Activated CD4-positive, alpha-beta T cell treated with anti-CD3 and anti-CD28 coated beads for 36 hours (primary cell): ENCODE measurements at regions of chr6 and their contacts with region 1.

Region 1: DNA sequence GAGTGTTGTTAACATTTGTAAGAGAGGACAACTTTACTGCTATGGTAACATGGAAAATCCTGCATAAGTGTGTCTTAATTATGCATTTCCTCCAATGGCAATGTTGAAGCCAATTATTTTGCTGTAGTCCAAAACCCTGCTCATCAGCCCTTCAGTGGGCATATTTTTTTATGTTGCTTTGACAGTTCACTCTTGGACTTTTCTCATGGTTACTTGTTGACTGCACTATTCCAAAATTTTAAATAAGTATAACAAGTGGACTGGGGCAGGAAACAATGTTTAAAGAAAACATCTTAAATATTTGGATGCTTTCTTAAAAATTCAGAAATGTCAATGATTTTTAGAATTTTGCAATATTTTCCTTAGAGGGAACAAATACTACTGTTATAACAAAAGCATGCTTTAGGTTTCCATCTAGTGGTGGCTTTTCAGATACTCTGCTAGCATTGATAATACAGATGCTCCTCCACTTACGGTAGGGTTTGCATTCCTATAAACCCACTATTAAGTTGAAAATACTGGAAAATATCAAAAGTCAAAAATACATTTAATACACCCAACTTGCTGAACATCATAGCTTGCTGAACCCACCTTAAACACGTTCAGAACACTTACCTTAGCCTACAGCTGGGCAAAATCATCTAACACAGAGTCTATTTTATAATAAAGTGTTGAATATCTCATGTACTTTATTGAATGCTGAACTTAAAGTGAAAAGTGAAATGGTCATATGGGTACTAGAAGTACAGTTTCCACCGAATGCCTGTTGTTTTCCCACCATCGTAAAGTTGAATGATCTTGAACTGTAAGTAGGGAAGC is 86.4 kb downstream of the ADGRG6 start:
- DNase-seq: no peak
- ATAC-seq: peak; percentile 51
- H3K4me3 Mint-ChIP-seq: no peak overlapping the region
- H3K27ac Mint-ChIP-seq: no peak overlapping the region
- H3K4me1 Mint-ChIP-seq: peaks cover 5% of the 10 kb centered on the region
- H3K27me3 Mint-ChIP-seq: no peaks in the 10 kb centered on the region

Region 2: GRCh38 chr6:142233945-142234682 is 154.1 kb before region 1 on chr6:
- CTCF ChIA-PET with region 1: no interaction called
- POLR2A ChIA-PET with region 1: no interaction called
- intact Hi-C with region 1: loop called in 1 of 2 experiments (anchors 5 kb)
- DNase-seq: no peak
- ATAC-seq: no peak
- H3K4me3 Mint-ChIP-seq: no peak overlapping the region
- H3K27ac Mint-ChIP-seq: no peak overlapping the region
- H3K4me1 Mint-ChIP-seq: peaks cover 2% of the 10 kb centered on the region
- H3K27me3 Mint-ChIP-seq: no peaks in the 10 kb centered on the region

Region 3: DNA sequence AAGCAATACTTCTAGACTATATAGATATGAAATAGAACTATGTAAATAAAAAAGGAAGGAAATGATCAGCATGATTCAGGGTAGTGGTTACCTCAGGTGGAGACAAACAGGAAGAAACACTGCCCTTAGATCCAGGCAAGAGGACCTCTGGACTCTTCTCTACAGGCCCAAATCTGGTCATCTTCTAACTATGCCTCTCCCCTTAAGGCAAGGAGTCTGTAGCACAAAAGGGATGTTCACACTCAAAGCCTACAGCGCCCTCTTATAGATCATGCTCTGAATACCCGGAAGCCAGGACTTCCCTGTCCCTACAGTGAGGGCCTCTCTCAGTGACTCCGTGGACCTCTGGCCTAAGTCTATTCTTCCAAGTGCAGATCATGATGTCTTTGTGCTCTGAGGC is 587.2 kb after region 1 on chr6:
- CTCF ChIA-PET with region 1: no interaction called
- POLR2A ChIA-PET with region 1: no interaction called
- intact Hi-C with region 1: no loop called
- DNase-seq: no peak
- ATAC-seq: no peak
- H3K4me3 Mint-ChIP-seq: no peak overlapping the region
- H3K27ac Mint-ChIP-seq: no peak overlapping the region
- H3K4me1 Mint-ChIP-seq: no peaks in the 10 kb centered on the region
- H3K27me3 Mint-ChIP-seq: no peaks in the 10 kb centered on the region

Region 4: DNA sequence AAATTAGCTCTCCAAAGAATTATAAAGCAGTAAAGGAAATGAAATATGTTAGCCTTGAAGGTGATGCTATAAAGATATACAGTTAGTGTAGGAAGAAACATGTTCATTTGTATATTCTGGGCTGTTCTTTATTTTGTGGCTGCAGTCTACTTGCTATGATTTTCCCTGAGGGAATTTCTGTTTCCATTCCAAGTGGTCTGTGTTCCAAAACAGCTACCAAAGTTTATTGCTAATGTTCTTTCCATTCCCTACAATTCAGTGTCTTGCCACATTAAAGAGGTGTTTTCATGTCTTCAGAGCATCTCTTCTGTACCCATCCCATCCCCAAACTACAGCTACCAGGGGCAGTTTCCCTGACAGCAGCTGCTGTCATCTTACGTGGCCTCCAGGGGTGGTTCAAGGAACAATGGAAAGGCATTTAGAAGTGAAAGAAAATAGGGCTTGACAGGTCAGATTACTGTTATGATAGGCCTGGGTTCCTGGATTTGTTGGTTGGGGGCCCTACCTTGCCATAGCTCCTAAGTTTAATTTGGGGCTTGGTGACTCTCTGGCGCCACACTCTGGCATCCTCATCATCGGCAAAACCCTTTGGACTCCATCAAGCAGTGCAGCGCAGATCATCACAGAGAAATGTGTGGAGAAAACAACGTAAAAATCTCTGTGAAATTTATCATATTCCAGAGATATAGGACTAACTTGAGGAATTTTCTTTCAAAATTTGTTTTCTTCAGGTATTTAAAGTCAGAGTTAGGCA is 638.7 kb after region 1 on chr6:
- CTCF ChIA-PET with region 1: no interaction called
- POLR2A ChIA-PET with region 1: no interaction called
- intact Hi-C with region 1: no loop called
- DNase-seq: peak; percentile 76
- ATAC-seq: peak; percentile 83
- H3K4me3 Mint-ChIP-seq: no peak overlapping the region
- H3K27ac Mint-ChIP-seq: no peak overlapping the region
- H3K4me1 Mint-ChIP-seq: peaks cover 5% of the 10 kb centered on the region
- H3K27me3 Mint-ChIP-seq: no peaks in the 10 kb centered on the region